ENCODE measurements at regions of chr13 and their contacts with region 1.

Region 1: GRCh38 chr13:79936368-79937136 is 404.4 kb downstream of the SPRY2 start:
- DNase-seq: peak; percentile 100
- H3K4me3 ChIP-seq: peak overlapping the region in 1 of 3 experiments; percentile 6
- H3K27ac ChIP-seq: peak overlapping the region; percentile 99
- H3K4me1 ChIP-seq: peaks cover 62% of the 10 kb centered on the region
- H3K27me3 ChIP-seq: no peaks in the 10 kb centered on the region
- CTCF ChIP-seq: no peak
- POLR2A ChIP-seq: no peak

Region 2: GRCh38 chr13:79767126-79767525 is 169.4 kb before region 1 on chr13:
- CTCF ChIA-PET with region 1: interaction called, 8 read pairs
- POLR2A ChIA-PET with region 1: interaction called, 4 read pairs
- dilution Hi-C with region 1: no loop called
- intact Hi-C with region 1: loop called (anchors 1 kb)
- DNase-seq: peak; percentile 73
- H3K4me3 ChIP-seq: no peak overlapping the region
- H3K27ac ChIP-seq: peak overlapping the region; percentile 76
- H3K4me1 ChIP-seq: peaks cover 14% of the 10 kb centered on the region
- H3K27me3 ChIP-seq: no peaks in the 10 kb centered on the region
- CTCF ChIP-seq: no peak
- POLR2A ChIP-seq: no peak

Region 3: DNA sequence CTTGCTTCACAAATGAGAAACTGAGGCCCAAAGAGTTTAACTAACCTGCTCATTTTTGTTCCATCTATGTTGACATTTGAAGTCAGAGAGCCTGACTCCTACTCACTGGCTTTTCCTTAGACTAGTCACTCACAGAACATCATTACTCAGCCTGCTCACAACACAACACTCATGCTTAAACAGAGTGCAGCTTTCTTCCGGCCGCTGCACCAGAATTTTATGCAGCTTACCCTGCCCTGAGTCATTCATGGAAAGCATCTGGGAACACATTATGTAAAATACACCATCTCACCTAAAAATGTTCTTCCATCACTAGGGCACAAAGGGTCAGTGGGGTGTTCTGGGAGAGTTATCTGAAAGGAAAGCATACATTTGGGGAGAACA is 100.9 kb after region 1 on chr13:
- CTCF ChIA-PET with region 1: interaction called, 3 read pairs
- POLR2A ChIA-PET with region 1: no interaction called
- dilution Hi-C with region 1: no loop called
- intact Hi-C with region 1: loop called (anchors 1 kb)
- DNase-seq: peak; percentile 77
- H3K4me3 ChIP-seq: no peak overlapping the region
- H3K27ac ChIP-seq: peak overlapping the region; percentile 77
- H3K4me1 ChIP-seq: peaks cover 36% of the 10 kb centered on the region
- H3K27me3 ChIP-seq: no peaks in the 10 kb centered on the region
- CTCF ChIP-seq: no peak
- POLR2A ChIP-seq: no peak

Region 4: DNA sequence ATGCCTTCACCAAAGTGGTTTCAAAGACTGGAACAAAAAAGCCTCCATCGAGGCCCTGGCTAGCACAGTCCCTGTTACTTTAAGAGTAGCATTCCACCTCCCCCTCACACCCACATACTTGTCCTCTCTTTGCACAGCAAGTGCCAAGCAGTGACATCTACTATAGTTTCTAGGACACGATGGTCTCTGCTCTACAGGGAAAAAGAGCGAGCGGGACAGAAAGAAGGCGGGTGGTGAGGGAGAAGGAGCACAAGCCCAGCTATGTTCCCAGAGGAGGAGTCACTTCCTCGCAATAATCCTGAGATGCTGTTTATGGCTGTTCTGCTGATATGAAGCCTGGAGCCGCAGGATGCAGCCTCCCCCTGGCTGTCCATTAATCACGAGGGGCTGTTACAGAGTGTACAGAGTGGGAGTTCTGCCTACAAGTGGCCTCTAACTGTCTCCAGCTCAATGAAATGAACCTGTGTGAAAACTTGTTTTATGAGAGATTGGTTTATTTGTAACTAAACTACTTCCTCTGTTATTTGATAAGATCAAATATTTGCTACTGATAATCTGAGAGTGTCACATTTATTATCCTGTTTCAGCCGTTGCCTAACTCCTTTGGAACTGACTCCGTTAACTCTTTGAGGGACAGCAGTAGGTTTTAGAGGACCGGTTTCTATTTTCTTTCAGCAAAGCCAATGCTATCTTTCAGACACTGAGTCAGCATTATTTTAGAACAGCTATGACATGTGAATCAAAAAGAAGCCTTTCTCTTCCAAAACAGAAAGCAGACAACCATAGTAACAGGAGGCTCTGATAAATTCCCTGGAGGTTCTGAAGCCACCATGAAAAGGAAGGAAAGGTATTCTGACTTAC is 196.4 kb after region 1 on chr13:
- CTCF ChIA-PET with region 1: interaction called, 5 read pairs
- POLR2A ChIA-PET with region 1: no interaction called
- dilution Hi-C with region 1: no loop called
- intact Hi-C with region 1: loop called (anchors 1 kb)
- DNase-seq: peak; percentile 84
- H3K4me3 ChIP-seq: peak overlapping the region in 1 of 3 experiments; percentile 21
- H3K27ac ChIP-seq: peak overlapping the region; percentile 32
- H3K4me1 ChIP-seq: peaks cover 23% of the 10 kb centered on the region
- H3K27me3 ChIP-seq: no peaks in the 10 kb centered on the region
- CTCF ChIP-seq: no peak
- POLR2A ChIP-seq: no peak

Region 5: GRCh38 chr13:80276371-80277289 is 340.1 kb after region 1 on chr13:
- CTCF ChIA-PET with region 1: interaction called, 4 read pairs
- POLR2A ChIA-PET with region 1: no interaction called
- dilution Hi-C with region 1: no loop called
- intact Hi-C with region 1: loop called (anchors 1 kb)
- DNase-seq: peak; percentile 79
- H3K4me3 ChIP-seq: no peak overlapping the region
- H3K27ac ChIP-seq: peak overlapping the region; percentile 48
- H3K4me1 ChIP-seq: peaks cover 12% of the 10 kb centered on the region
- H3K27me3 ChIP-seq: no peaks in the 10 kb centered on the region
- CTCF ChIP-seq: peak in 1 of 2 donors; percentile 14
- POLR2A ChIP-seq: no peak

Region 6: DNA sequence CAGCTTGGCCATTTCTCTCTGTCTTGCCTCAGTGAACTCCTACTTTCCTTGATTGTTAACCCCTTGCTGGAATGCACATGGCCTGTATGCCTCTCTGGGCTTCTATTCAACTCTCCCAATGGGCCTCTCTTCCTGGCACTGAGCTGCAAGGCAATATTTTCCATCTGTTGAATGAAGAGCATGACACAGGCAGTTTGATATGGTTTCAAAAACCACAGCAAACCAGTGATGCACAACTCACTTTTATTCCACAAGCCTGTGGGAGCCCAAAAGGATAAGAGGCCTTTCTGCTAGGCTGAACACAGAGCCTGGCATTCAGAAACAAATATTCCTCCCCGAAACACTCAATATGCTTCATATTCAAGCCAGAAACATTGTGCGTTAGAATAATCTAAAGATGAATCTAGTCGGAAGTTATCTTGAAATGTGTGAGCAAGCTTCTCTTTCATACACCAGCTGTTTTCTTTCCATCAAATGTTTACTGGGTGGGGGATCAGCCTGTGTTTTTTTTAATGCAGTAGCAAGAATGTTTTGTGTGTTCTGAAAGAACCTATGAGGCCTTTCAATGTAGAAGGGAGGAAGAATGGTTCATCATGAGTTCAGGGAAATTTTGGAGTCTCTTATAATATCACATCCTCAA is 847.5 kb after region 1 on chr13:
- CTCF ChIA-PET with region 1: no interaction called
- POLR2A ChIA-PET with region 1: no interaction called
- dilution Hi-C with region 1: no loop called
- intact Hi-C with region 1: no loop called
- DNase-seq: no peak
- H3K4me3 ChIP-seq: no peak overlapping the region
- H3K27ac ChIP-seq: no peak overlapping the region
- H3K4me1 ChIP-seq: peaks cover 14% of the 10 kb centered on the region
- H3K27me3 ChIP-seq: no peaks in the 10 kb centered on the region
- CTCF ChIP-seq: no peak
- POLR2A ChIP-seq: no peak

Region 7: GRCh38 chr13:80873589-80873988 is 937.0 kb after region 1 on chr13:
- CTCF ChIA-PET with region 1: no interaction called
- POLR2A ChIA-PET with region 1: no interaction called
- dilution Hi-C with region 1: no loop called
- intact Hi-C with region 1: loop called (anchors 2 kb)
- DNase-seq: no peak
- H3K4me3 ChIP-seq: no peak overlapping the region
- H3K27ac ChIP-seq: no peak overlapping the region
- H3K4me1 ChIP-seq: peaks cover 9% of the 10 kb centered on the region
- H3K27me3 ChIP-seq: no peaks in the 10 kb centered on the region
- CTCF ChIP-seq: no peak
- POLR2A ChIP-seq: no peak